Activated T-helper 2 cell treated with anti-CD3 and anti-CD28 coated beads, Interferon-gamma antibody, Interleukin-2, Interleukin-4, amounts not matched to agents 10 μg/mL and 5 μg/mL and 100 μg/mL, durations not matched to agents 14 hours and 24 hours and 36 hours (primary cell): ENCODE measurements at regions of chr2 and their contacts with region 1.

Region 1: GRCh38 chr2:159879051-159879604 is 81.1 kb upstream of the CD302 start:
- DNase-seq: no peak
- H3K4me3 Mint-ChIP-seq: peak overlapping the region; percentile 32
- H3K27ac Mint-ChIP-seq: peak overlapping the region; percentile 86
- H3K4me1 Mint-ChIP-seq: peaks cover 35% of the 10 kb centered on the region
- H3K27me3 Mint-ChIP-seq: no peaks in the 10 kb centered on the region

Region 2: GRCh38 chr2:159895258-159896065 is 16.3 kb after region 1 on chr2:
- intact Hi-C with region 1: loop called (anchors 1 kb)
- DNase-seq: no peak
- H3K4me3 Mint-ChIP-seq: no peak overlapping the region
- H3K27ac Mint-ChIP-seq: peak overlapping the region; percentile 84
- H3K4me1 Mint-ChIP-seq: peaks cover 64% of the 10 kb centered on the region
- H3K27me3 Mint-ChIP-seq: no peaks in the 10 kb centered on the region

Region 3: GRCh38 chr2:159904127-159904958 is 25.2 kb after region 1 on chr2:
- intact Hi-C with region 1: loop called (anchors 1 kb)
- DNase-seq: peak; percentile 71
- H3K4me3 Mint-ChIP-seq: peak within 1 kb of the TSS; percentile 94
- H3K27ac Mint-ChIP-seq: peak within 1 kb of the TSS; percentile 93
- H3K4me1 Mint-ChIP-seq: peaks cover 61% of the 10 kb centered on the region
- H3K27me3 Mint-ChIP-seq: no peaks in the 10 kb centered on the region

Region 4: DNA sequence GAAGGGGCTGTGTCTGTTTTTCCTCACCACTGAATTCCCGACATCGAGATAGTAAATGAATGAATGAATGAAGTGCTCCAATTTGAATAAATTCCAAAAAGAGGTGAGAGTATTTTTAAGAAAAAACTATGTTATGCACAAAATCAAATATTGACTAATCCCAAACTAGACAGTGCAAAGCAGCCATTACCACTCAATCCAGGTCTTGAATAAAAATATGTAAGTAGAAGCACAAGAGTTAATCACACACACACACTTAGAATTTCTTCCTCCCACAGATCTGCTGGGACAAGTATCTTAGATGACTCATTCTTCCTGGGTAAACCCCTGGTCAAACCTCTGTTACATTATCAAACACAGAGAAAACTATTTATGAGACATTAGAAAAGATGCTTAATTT is 81.3 kb after region 1 on chr2:
- intact Hi-C with region 1: loop called (anchors 2 kb)
- DNase-seq: no peak
- H3K4me3 Mint-ChIP-seq: no peak overlapping the region
- H3K27ac Mint-ChIP-seq: no peak overlapping the region
- H3K4me1 Mint-ChIP-seq: peaks cover 14% of the 10 kb centered on the region
- H3K27me3 Mint-ChIP-seq: no peaks in the 10 kb centered on the region

Region 5: GRCh38 chr2:160657196-160657595 is 778.1 kb after region 1 on chr2:
- intact Hi-C with region 1: no loop called
- DNase-seq: no peak
- H3K4me3 Mint-ChIP-seq: no peak overlapping the region
- H3K27ac Mint-ChIP-seq: no peak overlapping the region
- H3K4me1 Mint-ChIP-seq: peaks cover 10% of the 10 kb centered on the region
- H3K27me3 Mint-ChIP-seq: peaks cover 42% of the 10 kb centered on the region